ENCODE measurements at regions of chr22 and their contacts with region 1.

Region 1: GRCh38 chr22:25777870-25778269 is 35.9 kb downstream of the MYO18B start:
- DNase-seq: peak; percentile 38
- H3K4me3 Mint-ChIP-seq: no peak overlapping the region
- H3K27ac Mint-ChIP-seq: no peak overlapping the region
- H3K4me1 Mint-ChIP-seq: peaks cover 2% of the 10 kb centered on the region
- H3K27me3 Mint-ChIP-seq: peaks cover 2% of the 10 kb centered on the region

Region 2: DNA sequence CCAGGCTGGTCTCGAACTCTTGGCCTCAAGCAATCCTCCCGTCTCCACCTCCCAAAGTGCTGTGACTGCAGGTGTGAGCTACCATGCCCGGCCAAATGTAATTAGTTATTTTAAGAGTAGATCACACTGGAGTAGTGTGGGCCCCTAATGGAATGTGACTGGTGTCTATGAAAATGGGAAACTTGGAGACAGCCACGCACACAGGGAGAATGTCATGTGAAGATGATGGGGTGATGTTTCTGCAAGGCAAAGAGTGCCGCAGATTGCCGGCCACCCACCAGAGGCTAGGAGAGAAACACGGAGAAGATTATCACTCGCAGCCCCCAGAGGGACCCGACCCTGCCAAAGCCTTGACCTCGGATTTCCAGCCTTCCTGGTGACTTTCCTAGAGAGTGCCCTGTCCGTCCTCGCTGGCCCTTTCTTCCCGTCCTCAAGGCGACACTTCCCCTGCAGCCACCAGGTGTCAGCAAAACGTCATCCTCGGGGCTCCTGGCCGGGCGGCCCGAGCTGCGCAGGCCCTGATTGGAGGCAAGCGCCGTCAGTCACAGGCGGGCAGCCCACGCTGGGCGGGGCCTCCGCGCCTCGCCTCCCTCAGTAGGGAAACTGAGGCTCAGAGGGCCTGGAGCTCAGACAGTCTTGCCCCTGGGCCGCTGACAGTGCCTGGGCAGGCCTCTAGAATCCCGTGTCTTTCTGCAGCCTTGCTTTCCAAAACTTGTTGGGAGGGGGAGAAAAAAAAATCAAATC is 542.2 kb before region 1 on chr22:
- CTCF ChIA-PET with region 1: no interaction called
- intact Hi-C with region 1: loop called (anchors 5 kb)
- DNase-seq: peak; percentile 86
- H3K4me3 Mint-ChIP-seq: no peak overlapping the region
- H3K27ac Mint-ChIP-seq: no peak overlapping the region
- H3K4me1 Mint-ChIP-seq: peaks cover 5% of the 10 kb centered on the region
- H3K27me3 Mint-ChIP-seq: peaks cover 40% of the 10 kb centered on the region

Region 3: DNA sequence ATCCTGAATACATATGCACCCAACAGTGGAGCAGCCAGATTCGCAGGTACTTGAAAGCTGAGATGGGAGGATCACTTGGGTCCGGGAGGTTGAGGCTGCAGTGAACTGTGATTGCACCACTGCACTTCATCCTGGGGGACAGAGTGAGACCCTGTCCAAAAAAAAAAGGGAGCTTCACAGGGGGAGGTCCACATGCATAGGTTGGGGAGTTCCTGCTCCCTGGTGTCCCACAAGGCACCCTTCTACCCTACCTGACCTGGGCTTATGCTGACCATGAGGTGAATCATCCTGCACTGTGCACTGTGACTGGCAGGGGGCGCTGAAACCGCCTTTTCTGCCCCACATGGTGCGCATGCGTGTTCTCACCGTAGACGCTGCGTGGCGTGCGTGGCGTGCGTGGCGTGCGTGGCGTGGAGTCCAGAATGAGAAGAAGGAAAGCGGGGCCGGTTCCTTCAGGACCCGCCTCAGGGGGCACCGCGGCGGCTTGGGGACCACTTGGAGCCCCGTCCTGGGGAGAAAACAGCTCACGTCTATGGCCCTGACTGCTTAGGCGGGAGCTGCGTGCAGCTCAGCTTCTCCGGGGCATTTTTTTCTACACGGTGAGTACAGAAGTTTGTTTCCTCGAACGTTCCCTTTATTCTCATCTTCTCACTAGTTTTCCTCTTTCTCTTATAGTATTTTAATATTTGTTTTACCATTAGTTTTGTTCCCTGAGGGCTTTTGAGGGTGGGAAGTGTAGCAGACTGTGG is 330.0 kb before region 1 on chr22:
- CTCF ChIA-PET with region 1: interaction called, 4 read pairs
- intact Hi-C with region 1: loop called (anchors 5 kb)
- DNase-seq: peak; percentile 94
- H3K4me3 Mint-ChIP-seq: peak overlapping the region; percentile 86
- H3K27ac Mint-ChIP-seq: peak overlapping the region; percentile 91
- H3K4me1 Mint-ChIP-seq: peaks cover 42% of the 10 kb centered on the region
- H3K27me3 Mint-ChIP-seq: no peaks in the 10 kb centered on the region

Region 4: DNA sequence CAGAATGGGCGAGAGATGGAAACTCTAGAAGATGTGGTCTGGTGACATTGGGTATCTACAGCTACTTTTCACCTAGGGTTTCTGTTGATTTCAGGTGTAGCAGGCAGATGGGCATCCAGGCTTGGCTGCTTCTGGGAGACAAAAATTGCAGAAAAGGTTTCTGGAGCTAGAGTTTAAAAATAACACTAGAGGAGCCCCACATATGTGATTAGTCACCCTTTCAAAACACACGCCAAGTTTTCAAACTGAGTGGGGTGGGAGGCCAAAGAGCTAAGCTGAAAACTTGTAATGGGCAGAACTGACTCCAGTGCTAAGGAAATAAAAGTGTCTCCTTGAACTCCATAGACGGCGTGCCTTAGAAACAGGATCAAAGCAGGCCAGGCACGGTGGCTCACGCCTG is 132.6 kb before region 1 on chr22:
- CTCF ChIA-PET with region 1: no interaction called
- intact Hi-C with region 1: loop called (anchors 5 kb)
- DNase-seq: no peak
- H3K4me3 Mint-ChIP-seq: no peak overlapping the region
- H3K27ac Mint-ChIP-seq: no peak overlapping the region
- H3K4me1 Mint-ChIP-seq: peaks cover 4% of the 10 kb centered on the region
- H3K27me3 Mint-ChIP-seq: no peaks in the 10 kb centered on the region

Region 5: DNA sequence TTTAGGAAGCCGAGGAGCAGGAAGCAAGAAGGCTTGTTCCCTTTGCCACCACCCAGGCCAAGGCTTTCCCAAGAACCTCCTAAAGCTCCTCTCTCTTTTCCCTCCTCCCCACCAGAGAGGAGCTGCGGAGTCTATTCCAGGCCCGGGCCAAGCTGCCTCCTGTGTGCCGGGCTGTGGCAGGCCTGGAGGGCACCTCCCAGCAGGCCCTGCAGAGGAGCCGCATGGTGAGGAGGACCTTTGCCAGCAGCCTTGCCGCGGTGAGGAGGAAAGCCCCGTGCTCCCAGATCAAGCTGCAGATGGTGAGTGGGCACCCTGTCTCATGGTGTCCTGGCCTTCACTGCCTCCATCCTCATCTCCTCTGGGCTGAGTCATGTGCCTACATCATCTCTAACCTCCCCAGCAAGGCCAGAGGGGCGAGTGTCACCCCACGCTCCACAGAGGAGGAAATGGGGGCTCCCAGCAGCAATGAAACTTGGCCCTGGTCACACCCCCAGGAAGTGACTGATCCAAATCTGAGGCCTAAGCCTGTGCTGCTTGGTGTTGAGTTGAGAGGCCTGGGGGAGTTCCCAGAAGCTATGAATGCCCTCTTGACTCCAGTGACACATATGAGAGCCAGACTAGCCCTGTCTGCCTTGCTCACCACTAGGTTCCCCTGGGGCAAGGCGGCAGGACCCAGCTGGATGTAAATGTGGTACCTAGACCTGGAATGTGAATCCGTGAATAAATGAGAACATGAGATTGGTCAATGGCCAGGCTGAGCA is 68.3 kb after region 1 on chr22:
- CTCF ChIA-PET with region 1: no interaction called
- intact Hi-C with region 1: no loop called
- DNase-seq: peak; percentile 32
- H3K4me3 Mint-ChIP-seq: no peak overlapping the region
- H3K27ac Mint-ChIP-seq: no peak overlapping the region
- H3K4me1 Mint-ChIP-seq: no peaks in the 10 kb centered on the region
- H3K27me3 Mint-ChIP-seq: peaks cover 7% of the 10 kb centered on the region

Region 6: DNA sequence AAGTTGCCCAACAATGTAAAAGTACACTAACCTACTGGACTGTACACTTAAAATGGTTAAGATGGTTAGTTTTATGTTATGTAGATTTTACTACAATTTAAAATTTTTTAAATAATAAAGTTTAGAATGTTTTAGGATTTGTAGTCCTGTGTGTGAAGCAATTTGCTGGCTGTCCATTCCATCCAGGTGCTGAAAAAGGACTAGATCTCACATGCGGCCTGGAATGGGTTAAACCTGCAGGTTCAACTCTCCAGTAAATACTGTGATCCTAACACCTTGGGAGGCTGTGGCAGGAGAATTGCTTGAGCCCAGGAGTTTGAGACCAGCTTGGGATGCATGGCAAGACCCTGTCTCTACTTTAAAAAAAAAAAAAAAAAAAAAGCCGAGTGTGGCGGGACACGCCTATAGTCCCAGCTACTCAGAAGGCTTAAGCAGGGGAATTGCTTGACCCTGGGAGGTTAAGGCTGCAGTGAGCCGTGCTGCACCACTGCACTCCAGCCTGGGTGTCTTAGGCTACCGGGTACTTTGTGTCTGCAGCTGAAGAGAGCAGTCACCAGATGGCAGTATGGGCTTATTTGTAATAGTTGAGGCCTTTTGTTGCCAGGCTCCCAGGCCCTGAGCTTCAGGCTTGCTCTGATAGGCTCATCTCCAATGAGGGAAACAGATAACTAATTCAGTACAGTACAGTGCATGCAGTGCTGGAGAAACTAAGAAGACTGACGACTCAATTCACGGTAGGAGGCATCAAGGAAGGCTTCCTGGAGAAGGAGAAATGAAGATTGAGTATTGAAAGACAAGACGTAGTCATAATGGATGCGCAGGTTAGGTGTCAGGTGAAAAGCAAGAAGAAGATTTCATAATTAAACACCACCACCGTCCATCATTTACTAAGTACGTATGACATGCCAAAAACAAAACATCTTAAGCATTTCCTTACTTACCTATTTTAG is 586.5 kb after region 1 on chr22:
- CTCF ChIA-PET with region 1: interaction called, 5 read pairs
- intact Hi-C with region 1: loop called (anchors 10 kb)
- DNase-seq: peak; percentile 64
- H3K4me3 Mint-ChIP-seq: no peak overlapping the region
- H3K27ac Mint-ChIP-seq: no peak overlapping the region
- H3K4me1 Mint-ChIP-seq: peaks cover 7% of the 10 kb centered on the region
- H3K27me3 Mint-ChIP-seq: peaks cover 12% of the 10 kb centered on the region